AG04449 (cell line): ENCODE measurements at regions of chr19 and their contacts with region 1.

Region 1: DNA sequence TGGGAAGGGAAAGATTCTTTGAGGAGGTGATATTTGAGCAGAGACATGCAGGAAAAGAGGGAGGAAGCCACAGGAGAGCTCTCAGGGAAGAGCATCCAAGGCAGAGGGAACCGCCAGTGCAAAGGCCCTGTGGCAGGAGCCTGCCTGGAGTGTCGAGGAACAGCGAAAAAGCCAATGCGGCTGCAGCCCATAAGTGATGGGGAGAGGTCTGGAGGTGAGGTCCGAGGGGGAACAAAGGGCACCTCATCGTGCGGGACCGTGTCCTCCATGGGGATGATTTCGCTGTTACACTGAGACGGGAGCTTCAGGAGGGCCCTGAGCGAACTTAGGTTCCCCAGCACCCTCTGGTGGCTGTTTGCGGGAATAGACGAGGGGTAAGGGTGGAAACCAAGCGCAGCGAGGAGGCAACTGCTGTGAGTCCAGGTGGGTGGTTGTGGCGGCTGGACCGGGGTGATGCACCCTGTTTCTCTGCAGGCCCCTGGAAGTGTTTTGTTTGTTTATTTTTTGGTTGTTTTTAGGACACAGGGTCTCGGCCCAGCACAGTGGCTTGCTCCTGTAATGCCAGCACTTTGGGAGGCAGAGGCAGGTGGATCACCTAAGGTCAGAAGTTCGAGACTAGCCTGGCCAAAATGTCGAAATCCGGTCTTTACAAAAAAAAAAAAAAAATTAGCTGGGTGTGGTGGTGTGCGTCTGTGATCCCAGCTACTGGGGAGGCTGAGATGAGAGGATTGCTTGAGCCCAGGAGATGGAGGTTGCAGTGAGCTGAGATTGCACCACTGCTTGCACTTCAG is 5.9 kb upstream of the EHD2 start:
- DNase-seq: no peak
- H3K4me3 ChIP-seq: no peak overlapping the region
- CTCF ChIP-seq: peak; percentile 94

Region 2: DNA sequence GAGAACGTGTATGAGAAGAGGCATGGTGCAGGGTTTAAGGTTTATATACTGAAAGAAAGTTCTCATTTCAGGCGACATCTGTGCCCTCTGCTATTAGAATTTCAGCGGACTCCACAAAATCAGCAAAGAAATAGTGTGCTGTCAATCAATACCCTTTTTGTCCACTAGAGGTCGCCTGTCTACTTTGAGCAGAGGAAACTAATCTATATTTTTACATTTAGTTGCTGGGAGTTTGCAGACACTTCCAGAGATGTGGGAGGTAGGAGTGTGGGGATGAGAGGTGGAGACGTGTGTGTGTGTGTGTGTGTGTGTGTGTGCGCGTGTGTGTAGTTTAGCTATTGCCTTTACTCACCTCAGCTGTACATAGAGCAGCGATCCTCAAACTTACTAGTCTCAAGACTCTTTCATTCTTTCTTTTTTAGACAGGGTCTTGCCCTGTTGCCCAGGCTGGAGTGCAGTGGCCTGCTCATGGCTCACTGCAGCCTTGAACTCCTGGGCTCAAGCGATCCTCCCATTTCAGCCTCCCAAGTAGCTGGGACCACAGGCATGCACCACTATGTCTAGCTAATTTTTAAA is 422.9 kb before region 1 on chr19:
- CTCF ChIA-PET with region 1: interaction called, 10 read pairs
- POLR2A ChIA-PET with region 1: no interaction called
- DNase-seq: no peak
- H3K4me3 ChIP-seq: no peak overlapping the region
- CTCF ChIP-seq: peak; percentile 67

Region 3: DNA sequence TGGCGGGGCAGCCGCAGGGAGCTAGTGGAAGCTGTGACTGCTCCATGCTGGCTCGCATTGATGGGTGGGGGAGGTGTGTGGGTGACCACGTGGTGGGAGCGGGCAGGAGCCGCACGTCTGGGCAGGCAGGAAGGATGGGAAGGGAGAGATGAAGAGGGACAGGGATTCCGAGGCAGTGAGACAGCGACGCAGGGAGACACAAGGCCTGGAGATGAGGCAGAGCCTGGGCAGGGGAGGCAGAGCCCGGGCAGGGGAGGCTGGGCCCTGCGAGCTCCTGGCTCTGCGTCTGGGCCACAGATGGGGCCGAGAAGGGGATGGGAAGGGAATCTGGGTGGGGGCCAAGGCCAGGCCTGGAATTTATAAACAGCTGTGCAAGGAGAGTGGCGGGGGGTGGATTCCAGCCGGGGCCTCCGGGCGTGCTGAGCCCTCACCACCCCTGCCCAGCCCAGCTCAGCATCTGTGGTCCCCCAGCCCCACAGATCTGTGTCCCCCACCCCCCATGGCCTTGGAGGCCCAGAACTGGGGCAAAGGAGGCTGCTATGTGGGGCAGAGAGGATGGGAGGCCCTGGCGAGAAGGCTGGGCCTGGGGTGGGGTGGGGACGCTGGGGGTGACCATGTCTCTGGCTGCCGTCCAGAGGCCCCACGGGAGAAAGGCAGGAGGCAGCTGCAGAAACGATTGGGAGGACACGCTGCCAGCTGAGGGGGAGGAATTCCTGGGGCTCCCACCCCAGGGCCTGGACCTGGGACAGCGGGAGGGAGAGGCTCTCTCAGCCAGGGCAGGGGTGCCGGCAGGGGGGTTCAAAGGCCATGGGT is 11.9 kb after region 1 on chr19:
- CTCF ChIA-PET with region 1: interaction called, 20 read pairs
- POLR2A ChIA-PET with region 1: interaction called, 4 read pairs
- DNase-seq: peak; percentile 98
- H3K4me3 ChIP-seq: peak overlapping the region; percentile 46
- CTCF ChIP-seq: no peak

Region 4: DNA sequence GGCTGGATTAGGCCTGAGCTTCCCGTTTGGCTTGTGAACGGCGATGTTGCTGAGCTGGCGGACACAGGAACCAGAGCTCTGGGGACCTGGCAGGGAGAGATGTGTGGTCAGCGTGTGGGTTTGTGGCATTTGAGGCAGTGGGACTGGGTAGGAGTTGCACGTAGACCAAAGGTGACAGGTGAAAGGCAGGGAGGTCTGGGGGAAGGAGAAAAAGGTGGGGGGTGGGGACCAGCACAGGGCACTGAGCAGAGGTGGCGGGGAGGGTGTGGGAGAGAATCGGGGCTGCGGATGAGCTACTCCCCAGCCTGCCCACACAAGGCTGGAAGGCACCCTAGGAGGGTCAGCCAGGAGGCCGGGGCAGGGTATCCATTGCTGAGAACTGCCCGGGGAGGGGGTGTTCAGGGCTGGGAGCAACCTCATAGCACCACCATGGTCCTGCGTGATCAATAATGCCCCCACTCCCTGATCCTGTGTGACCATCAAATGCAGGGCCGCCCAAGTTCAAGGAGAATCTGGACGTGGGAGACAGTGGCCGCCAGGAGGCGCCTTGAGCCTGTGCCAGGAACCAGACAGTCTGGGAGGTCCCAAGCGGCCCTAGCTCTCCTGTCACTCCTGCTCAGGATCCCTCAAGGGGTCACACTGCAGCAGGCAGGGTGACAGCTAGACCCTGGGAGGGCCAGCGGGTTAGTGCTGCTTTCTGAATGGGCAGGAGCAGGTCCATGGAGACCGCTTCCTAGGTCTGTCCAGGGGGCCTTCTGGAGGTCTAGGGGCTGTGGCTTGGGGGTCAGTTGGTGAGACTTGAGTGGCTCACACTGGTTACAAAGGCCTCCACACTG is 58.4 kb after region 1 on chr19:
- CTCF ChIA-PET with region 1: interaction called, 57 read pairs
- POLR2A ChIA-PET with region 1: interaction called, 3 read pairs
- DNase-seq: no peak
- H3K4me3 ChIP-seq: no peak overlapping the region
- CTCF ChIP-seq: peak; percentile 88

Region 5: GRCh38 chr19:47854459-47854858 is 147.1 kb after region 1 on chr19:
- CTCF ChIA-PET with region 1: no interaction called
- POLR2A ChIA-PET with region 1: no interaction called
- DNase-seq: no peak
- H3K4me3 ChIP-seq: no peak overlapping the region
- CTCF ChIP-seq: no peak